Mammary epithelial cell (primary cell): ENCODE measurements at regions of chr9 and their contacts with region 1.

Region 1: DNA sequence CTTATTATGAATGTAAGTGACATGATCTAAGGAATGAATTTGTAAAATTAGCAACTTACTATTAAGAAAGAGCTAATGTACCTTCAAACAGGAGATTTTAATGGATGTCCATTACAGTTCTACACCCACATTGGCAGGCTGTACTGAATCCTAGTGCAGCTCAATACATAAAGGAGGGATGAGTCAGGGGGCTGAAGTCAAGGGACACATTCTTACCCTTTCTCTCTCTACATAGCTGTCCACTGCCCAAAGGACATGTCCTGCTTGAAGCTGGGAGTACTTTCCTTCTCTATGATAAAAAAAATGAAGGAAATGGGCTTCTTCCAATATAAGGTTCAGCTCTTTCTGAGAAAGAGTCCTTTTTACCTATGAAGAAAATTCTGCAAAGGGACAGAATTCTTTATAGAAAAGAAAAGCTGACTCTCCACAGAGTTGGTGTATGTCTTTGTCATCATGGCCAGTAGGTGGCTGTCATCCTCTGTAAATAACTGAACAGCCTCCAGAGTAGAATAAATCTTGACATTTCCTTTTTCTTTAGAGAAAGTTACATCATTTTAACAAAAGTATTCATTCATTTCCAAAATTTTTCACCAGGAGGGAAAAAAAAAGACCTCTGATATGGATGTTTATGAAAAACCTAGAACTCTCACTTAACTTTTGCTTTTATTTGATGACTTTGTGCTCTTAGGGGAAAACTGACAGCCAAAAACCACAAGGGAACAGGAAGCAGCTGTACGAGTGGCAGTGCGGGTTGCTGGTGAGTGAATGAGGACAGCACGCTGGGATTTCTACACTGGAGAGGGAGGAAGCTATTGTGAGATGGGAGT is 13.1 kb upstream of the IFNA14 start:
- DNase-seq: peak; percentile 41
- H3K4me3 ChIP-seq: peak overlapping the region in 1 of 3 experiments; percentile 6
- H3K27ac ChIP-seq: no peak overlapping the region
- H3K4me1 ChIP-seq: no peaks in the 10 kb centered on the region
- H3K27me3 ChIP-seq: peaks cover 7% of the 10 kb centered on the region
- CTCF ChIP-seq: peak; percentile 50 to 65

Region 2: GRCh38 chr9:21317956-21318923 is 65.3 kb after region 1 on chr9:
- CTCF ChIA-PET with region 1: no interaction called
- dilution Hi-C with region 1: no loop called
- in situ Hi-C with region 1: no loop called
- intact Hi-C with region 1: loop called (anchors 2 kb)
- DNase-seq: peak; percentile 25
- H3K4me3 ChIP-seq: no peak overlapping the region
- H3K27ac ChIP-seq: no peak overlapping the region
- H3K4me1 ChIP-seq: peaks cover 10% of the 10 kb centered on the region
- H3K27me3 ChIP-seq: no peaks in the 10 kb centered on the region
- CTCF ChIP-seq: peak; percentile 69 to 76

Region 3: DNA sequence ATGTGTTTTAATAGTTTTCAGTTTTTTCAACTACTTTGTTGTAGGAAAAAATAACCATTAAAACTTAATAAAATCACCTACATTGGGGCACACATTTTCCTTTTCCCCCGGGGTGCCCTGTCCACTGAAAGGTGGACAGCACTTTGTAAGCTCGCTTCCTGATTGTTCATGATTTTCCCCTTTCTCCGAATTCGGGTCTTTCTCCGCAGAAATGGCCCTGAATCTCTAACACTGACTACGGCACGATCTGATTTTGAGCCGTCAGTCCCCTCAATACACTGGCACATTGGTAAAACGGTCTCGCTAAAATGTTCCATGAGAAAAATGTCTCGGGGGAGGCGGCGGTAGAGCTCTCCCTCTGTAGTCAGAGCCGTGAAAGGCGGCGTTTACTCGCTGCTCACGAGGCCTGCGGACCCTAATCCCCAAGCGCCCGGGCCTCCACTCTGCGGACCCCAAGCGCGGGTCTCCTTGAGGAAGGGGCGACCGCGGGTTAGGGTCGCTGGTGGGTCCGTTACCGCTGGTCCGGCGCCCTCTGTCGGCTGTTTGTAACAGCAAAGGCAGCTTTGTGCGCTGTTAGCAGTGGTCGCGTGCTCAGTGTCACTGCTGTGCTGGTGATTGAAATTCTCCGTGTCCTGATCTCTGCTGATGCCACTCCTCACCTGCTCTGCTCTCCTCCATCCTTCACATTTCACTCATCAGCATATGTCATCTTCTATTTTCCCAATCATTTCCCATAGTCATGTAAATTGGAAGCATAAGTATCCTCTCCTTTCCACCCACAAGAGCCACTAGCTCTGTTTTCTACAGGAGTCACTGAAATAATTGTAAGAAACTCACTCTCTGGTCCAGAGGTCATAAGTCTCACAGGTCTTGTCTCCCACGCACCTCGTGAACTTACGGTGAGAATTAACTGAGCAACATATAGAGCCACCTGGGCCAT is 143.1 kb after region 1 on chr9:
- CTCF ChIA-PET with region 1: interaction called, 4 read pairs
- dilution Hi-C with region 1: no loop called
- in situ Hi-C with region 1: loop called in 1 of 2 experiments (anchors 10 kb)
- intact Hi-C with region 1: loop called (anchors 2 kb)
- DNase-seq: no peak
- H3K4me3 ChIP-seq: peak overlapping the region; percentile 51 to 58 (median 51)
- H3K27ac ChIP-seq: no peak overlapping the region
- H3K4me1 ChIP-seq: peaks cover 6% of the 10 kb centered on the region
- H3K27me3 ChIP-seq: peaks cover 11% of the 10 kb centered on the region
- CTCF ChIP-seq: peak; percentile 76 to 86

Region 4: DNA sequence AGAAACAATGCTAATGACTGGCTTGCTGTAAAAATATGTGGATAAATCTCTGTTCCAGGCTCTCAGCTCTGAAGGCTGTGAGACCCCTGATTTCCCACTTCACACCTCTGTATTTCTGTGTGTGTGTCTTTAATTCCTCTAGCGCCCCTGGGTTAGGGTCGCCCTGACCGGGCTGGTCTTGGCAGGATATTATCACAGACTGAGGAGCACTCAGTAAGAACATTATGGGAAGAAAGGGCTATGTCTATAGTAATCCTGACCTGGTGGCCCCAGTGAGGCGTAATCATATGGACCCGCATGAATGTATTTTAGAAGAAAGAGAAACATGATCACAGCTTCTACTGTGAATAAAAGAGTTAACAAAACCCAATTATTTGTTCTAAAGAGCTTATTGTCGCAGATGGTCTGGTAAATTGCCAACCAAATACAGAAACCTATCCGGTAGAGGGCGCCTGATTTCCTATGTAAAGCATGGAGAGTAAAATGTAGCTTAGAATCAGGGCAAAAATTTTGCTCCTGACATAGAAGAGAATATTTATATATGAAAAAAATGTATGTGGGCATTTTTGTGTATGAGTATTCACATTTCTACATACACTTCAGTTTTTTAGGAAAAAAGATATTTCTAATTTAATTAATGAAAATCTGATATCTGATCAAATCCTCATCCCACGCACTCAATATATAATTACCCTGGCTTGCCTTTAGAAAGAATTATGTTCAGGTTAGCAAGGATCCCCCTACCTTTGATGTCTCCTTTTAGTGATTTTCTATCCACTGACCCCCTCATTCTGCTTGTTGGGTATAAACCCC is 181.5 kb after region 1 on chr9:
- CTCF ChIA-PET with region 1: interaction called, 4 read pairs
- dilution Hi-C with region 1: no loop called
- in situ Hi-C with region 1: no loop called
- intact Hi-C with region 1: loop called (anchors 1 kb)
- DNase-seq: peak; percentile 40
- H3K4me3 ChIP-seq: no peak overlapping the region
- H3K27ac ChIP-seq: no peak overlapping the region
- H3K4me1 ChIP-seq: no peaks in the 10 kb centered on the region
- H3K27me3 ChIP-seq: peaks cover 3% of the 10 kb centered on the region
- CTCF ChIP-seq: peak; percentile 71 to 72

Region 5: GRCh38 chr9:21455320-21455719 is 202.4 kb after region 1 on chr9:
- CTCF ChIA-PET with region 1: no interaction called
- dilution Hi-C with region 1: no loop called
- in situ Hi-C with region 1: no loop called
- intact Hi-C with region 1: loop called (anchors 2 kb)
- DNase-seq: peak; percentile 19
- H3K4me3 ChIP-seq: no peak overlapping the region
- H3K27ac ChIP-seq: no peak overlapping the region
- H3K4me1 ChIP-seq: peaks cover 16% of the 10 kb centered on the region
- H3K27me3 ChIP-seq: no peaks in the 10 kb centered on the region
- CTCF ChIP-seq: peak; percentile 67 to 74